Spleen (tissue), 13 donors: ENCODE measurements at regions of chr18 and their contacts with region 1.

Region 1: DNA sequence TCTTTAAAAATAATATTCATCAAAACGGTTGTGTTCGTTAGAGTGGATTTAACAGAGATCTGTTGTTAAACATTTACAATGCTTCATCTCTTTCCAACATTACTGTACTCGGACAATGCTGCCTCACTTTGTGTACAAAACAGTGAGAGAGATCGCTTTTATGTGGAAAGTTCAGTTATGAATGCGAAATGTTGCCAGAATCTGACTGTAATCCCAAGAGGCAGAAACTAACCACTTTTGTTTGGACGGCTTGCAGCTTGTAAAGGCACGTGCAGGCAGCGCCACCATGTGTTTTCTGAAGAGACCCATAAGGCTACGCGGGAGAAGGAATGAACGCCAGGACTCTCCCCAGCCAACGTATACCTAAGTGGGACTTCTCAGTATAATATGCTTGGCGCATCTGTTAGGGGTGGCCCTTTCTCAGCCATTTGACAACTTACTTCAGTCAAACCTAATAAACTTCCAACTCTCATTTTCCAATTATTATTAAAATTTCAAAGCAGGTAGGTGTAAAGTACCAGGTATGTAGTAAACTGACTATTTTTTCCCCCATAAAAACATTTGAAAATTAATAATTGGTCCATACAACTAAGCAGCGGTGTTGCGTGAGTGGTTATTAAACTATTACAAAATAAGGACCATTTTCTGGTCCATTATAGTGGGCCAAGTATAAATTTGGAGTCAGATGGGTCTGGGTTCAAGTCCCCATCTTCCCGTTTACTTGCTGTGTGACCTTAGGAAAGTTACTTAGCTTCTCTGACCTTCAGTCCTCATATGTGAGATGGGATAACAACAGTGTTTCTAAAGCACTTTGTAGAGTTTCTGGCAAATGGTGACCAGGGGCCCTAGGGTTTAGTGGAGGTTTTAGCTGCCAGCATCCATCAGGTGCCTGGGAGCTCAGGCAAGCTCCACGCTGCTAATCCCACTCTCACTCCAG is 5.6 kb upstream of the NAPG start:
- DNase-seq: peak; percentile 89
- H3K4me3 ChIP-seq: no peak overlapping the region
- H3K27ac ChIP-seq: no peak overlapping the region
- H3K4me1 ChIP-seq: peaks cover 5 to 31% (median 24%) of the 10 kb centered on the region in 6 donors
- H3K27me3 ChIP-seq: peaks cover 0 to 24% (median 0%) of the 10 kb centered on the region in 7 donors
- CTCF ChIP-seq: peak; percentile 43 to 81 (median 68)
- POLR2A ChIP-seq: no peak

Region 2: DNA sequence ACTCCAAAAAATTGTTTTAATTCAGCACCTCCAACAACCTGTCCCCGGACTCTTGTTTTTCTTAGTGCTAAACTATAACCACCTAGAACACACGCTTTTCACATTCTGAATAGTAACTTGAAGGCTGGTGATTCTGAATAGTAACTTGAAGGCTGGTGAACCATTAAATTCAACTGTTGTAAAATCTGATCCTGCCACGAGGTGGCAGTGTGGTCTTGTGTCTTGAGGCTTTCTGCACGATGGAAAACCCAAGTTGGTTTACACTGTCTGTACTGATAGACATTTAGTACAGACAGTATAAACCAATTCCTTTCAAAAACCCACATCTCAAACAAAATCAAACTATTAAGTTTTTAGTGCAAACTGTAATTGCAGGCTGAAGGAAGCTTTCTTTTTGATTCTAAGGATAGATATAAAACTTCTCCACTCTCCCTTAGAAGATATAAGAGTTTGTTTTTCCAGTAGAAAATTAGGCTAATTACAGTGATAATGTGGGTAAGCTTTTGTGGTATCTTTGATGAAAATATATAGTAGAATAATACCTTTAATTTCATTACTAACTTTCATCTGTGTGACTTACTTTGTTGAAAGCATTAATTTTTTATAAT is 548.9 kb before region 1 on chr18:
- intact Hi-C with region 1: loop called (anchors 2 kb)
- DNase-seq: no peak
- H3K4me3 ChIP-seq: no peak overlapping the region
- H3K27ac ChIP-seq: no peak overlapping the region
- H3K4me1 ChIP-seq: peaks cover 2 to 33% (median 12%) of the 10 kb centered on the region in 6 donors
- H3K27me3 ChIP-seq: peaks cover 0 to 36% (median 11%) of the 10 kb centered on the region in 7 donors
- CTCF ChIP-seq: peak; percentile 60 to 86 (median 78)
- POLR2A ChIP-seq: no peak

Region 3: DNA sequence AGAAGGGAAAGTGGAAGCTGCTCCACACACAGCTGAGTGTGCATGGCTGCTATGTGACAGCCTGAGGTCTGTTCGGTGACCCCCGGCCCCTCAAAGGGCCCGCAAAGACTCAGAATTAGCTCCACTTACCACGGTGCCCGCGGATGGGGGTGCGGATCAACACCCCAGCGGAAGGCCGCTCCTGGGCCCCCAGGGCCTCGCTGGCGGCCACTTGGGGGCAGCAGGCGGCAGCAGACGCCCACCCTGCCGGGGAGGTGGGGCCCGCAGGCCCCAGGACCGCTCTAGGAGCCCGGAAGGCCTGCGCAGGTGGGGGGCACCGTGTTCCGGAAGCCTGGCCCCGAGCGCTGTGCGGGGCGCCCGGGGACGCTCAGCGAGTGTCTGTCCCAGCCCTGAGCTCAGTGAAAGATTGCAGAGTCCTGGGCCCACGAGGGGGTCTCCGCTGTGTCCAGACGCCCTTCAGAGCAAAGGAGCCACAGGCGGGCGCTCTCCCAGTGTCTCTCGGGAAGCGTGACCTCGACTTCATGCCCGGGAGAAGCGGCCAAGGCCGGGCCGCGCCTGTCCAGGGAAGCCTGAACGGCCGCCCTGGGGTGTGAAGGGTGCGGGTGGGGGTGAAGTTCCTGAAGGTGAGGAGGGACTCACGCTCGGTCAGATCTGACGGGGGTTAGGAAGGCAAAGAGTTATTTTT is 487.8 kb before region 1 on chr18:
- intact Hi-C with region 1: loop called (anchors 5 kb)
- DNase-seq: peak; percentile 89
- H3K4me3 ChIP-seq: peak overlapping the region; percentile 2 to 65 (median 32)
- H3K27ac ChIP-seq: peak overlapping the region; percentile 29 to 79 (median 68)
- H3K4me1 ChIP-seq: peaks cover 6 to 24% (median 17%) of the 10 kb centered on the region in 6 donors
- H3K27me3 ChIP-seq: peaks cover 0 to 9% (median 0%) of the 10 kb centered on the region in 7 donors
- CTCF ChIP-seq: peak; percentile 23 to 80 (median 62)
- POLR2A ChIP-seq: no peak

Region 4: DNA sequence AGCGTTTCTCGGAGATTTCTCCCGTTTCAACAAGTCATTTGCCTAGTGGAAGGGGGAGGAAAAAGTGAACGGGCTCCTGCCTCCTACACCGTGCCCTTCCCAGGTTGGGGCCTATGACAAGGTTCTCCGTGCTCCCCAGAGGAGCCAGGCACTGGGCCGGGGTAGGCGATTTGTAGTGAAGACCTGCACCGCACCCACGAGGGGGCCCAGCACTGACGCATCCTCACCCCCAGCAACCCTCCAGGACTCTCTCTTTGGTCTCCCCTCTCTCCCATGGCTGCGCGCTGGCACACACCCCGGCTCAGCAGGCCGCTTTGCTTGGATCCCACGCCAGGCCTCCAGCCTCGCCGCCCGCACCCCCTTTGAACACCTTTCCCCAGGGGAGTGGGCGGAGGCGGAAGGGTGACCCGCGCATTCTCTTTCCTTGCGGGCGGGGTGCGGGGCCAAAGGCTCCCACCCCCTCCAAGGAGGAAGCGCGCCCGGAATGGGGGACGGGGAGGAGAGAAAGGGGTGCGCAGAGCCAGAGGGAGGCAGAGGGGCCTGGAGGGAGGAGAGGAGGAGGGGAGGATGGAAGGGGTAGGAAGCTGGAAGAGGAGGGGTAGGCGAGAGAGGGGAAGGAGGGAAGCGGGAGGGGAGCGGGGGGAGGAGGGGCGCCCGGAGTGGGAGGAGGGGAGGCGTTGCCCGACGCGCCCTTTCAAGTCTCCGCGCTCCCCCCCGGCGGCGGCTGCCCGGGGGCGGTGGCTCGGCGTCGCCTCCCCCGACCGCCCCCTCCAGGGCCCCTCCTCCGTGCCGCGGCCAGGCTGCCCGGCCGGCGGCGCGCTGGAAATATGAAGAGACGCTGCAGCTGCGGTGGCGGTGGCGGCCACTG is 66.2 kb before region 1 on chr18 and contains the start of gene APCDD1:
- intact Hi-C with region 1: no loop called
- DNase-seq: no peak
- H3K4me3 ChIP-seq: peak within 1 kb of the TSS; percentile 30 to 72 (median 44)
- H3K27ac ChIP-seq: peak within 1 kb of the TSS in 7 of 8 donors; percentile 63 to 81 (median 70)
- H3K4me1 ChIP-seq: peaks cover 0 to 27% (median 13%) of the 10 kb centered on the region in 6 donors
- H3K27me3 ChIP-seq: peaks cover 0 to 74% (median 30%) of the 10 kb centered on the region in 7 donors
- CTCF ChIP-seq: no peak
- POLR2A ChIP-seq: no peak
- total RNA-seq, gene APCDD1: 4.4 to 11.8 (median 9.6) TPM